Activated CD4-positive, alpha-beta T cell treated with anti-CD3 and anti-CD28 coated beads, Interleukin-2, amount 10 ng/mL, durations not matched to agents 24 days and 14 days (primary cell): ENCODE measurements at regions of chr5 and their contacts with region 1.

Region 1: DNA sequence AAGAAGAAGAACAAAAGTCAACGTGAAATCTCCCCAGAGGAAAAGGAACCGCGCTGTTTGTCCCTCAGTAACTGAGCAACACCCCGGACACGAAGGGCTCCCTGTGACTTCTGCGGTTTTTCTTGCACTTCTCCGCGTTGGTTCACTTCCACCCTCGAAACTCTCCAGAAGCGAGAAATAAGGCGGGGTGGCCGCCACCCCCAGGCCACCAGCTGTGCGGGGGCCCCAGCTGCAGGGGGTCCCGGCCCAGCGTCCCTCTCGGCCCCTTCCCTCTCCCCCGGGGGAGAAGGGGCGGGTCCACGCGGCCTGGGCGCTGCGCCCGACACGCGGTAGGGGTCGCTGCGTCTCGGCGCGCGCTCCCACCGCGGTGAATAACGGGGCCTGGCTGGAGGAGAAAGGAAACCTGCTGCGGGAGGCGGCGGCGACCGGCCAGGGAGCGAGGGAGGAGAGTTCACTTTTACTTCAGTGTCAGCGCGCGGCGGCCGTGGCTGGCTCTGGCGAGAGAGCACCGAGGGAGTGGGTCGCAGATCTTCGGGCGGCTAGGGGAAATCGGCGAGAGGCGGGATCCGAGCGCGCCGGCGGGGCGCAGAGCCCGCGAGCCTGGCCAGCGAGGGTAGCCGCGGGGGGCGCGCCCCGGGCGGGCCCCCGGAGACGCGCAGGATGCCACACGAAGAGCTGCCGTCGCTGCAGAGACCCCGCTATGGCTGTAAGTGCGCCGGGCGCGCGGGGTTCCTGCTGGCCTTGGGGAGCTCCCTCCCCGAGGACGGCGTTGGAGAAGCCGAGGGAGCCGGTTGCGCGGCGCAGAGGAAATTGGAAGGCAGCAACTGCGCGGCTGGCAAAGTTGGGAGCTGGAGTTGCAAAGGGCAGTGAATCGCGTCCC is at the start of gene IQGAP2:
- DNase-seq: peak; percentile 96
- H3K4me3 Mint-ChIP-seq: peak within 1 kb of the TSS; percentile 95
- H3K27ac Mint-ChIP-seq: peak within 1 kb of the TSS; percentile 99
- H3K4me1 Mint-ChIP-seq: peaks cover 57% of the 10 kb centered on the region
- H3K27me3 Mint-ChIP-seq: peaks cover 7% of the 10 kb centered on the region
- total RNA-seq, gene IQGAP2: 37.3 and 39.3 TPM in 2 replicates

Region 2: DNA sequence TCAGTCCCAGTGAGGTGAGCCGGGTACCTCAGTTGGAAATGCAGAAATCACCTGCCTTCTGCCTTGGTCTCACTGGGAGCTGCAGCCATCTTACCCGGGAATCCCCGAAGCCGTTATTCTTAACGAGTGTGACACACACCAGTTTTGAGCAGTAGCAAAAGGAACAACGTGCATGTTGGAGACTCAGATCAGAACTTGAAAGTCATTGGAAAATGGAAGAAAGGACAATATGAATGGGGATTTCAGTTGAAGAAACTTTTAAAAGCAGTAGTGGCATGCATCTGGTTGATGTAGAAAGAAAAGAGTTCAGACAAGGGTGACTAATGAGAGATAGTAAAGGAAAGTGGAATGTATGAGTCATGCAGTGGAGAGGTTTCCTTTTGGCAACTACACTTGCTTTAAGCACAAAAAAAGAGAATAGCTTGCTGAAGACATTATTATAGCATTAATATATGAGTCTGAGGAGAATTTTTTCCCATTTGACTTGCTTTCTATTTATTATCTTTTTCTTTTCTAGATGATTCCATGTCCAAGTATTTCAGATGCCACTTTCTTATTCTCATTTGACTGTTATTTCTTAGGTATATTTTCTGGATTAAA is 836.3 kb before region 1 on chr5:
- intact Hi-C with region 1: loop called (anchors 1 kb)
- DNase-seq: peak; percentile 83
- H3K4me3 Mint-ChIP-seq: peak overlapping the region; percentile 84
- H3K27ac Mint-ChIP-seq: peak overlapping the region; percentile 98
- H3K4me1 Mint-ChIP-seq: peaks cover 39% of the 10 kb centered on the region
- H3K27me3 Mint-ChIP-seq: peaks cover 2% of the 10 kb centered on the region

Region 3: DNA sequence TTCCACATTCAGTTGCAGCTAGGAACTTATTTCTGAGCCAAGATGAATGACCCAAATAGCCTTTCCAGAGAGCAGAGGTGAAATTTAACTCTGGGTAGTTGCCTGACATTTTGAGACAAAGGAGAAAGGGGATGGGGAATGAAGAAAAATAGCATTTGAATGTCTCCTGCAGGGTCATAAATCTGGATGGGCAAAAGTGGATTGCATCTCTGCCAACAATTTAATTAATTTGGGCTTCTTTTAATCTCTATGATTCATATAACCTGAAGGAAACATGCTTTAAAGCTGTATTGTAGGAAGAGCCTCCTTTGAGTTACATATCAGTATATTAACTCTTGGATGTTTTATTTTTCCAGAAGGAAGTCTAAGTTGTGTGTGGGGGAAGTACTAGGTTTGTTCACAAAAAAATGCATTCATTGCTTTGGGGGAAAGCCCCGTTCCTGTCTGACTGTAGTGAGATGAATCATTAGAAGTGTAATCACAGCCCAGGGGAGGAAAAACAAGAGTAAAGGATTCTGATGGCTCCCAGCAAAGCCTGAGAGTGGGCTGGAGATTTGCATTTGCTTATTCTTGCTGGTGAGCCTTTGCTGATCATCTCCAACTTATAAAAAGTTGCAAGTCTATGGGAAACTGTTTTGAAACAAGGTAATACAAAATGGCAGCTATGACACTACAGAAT is 133.1 kb before region 1 on chr5:
- intact Hi-C with region 1: loop called (anchors 1 kb)
- DNase-seq: peak; percentile 77
- H3K4me3 Mint-ChIP-seq: peak overlapping the region; percentile 83
- H3K27ac Mint-ChIP-seq: peak overlapping the region; percentile 95
- H3K4me1 Mint-ChIP-seq: peaks cover 41% of the 10 kb centered on the region
- H3K27me3 Mint-ChIP-seq: no peaks in the 10 kb centered on the region

Region 4: GRCh38 chr5:76473661-76474060 is 70.5 kb after region 1 on chr5:
- intact Hi-C with region 1: loop called (anchors 2 kb)
- DNase-seq: peak; percentile 88
- H3K4me3 Mint-ChIP-seq: peak overlapping the region; percentile 51
- H3K27ac Mint-ChIP-seq: peak overlapping the region; percentile 86
- H3K4me1 Mint-ChIP-seq: peaks cover 50% of the 10 kb centered on the region
- H3K27me3 Mint-ChIP-seq: no peaks in the 10 kb centered on the region

Region 5: DNA sequence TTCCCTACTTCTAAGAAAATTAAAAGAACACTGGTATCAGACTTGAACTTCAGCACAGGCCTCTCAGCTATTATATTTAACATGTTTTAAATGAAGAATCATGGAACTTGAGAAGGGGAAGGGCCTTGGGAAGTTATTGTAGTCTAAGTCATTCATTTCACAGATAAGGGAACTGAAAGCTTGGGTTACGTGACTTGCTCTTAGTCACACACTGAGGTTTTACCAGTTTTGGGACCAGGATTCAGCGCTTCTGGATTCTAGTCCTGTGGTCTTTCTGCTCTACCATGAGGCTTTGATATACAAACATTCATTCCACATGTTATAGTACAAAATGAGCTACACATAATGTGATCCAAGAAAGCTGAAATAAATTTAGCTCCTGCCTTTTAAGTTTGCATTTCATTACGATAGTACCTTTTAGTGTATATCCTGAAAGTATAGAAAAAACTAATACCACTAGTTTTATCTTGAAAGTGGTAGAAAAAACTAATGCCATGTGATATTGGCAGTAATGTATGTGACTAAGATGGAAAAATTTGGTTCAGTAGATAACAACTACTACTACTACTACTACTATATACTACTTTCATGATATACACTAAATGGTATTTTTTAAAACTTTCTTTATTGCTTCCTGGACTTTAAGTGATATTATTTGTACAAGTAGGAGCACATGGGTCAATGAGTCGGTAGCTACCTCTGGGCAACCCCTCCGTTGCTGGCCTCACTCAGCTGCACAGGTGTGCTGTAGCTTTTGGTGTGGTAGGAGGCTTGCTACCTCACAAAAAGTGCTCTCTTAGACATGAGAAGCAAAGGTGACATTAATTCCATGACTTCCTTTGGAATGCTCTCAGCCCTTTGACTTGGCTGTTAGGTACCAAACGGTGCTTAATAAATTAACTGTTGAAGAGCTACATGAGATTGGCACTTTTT is 179.4 kb after region 1 on chr5:
- intact Hi-C with region 1: loop called (anchors 1 kb)
- DNase-seq: no peak
- H3K4me3 Mint-ChIP-seq: no peak overlapping the region
- H3K27ac Mint-ChIP-seq: peak overlapping the region; percentile 62
- H3K4me1 Mint-ChIP-seq: peaks cover 25% of the 10 kb centered on the region
- H3K27me3 Mint-ChIP-seq: no peaks in the 10 kb centered on the region

Region 6: DNA sequence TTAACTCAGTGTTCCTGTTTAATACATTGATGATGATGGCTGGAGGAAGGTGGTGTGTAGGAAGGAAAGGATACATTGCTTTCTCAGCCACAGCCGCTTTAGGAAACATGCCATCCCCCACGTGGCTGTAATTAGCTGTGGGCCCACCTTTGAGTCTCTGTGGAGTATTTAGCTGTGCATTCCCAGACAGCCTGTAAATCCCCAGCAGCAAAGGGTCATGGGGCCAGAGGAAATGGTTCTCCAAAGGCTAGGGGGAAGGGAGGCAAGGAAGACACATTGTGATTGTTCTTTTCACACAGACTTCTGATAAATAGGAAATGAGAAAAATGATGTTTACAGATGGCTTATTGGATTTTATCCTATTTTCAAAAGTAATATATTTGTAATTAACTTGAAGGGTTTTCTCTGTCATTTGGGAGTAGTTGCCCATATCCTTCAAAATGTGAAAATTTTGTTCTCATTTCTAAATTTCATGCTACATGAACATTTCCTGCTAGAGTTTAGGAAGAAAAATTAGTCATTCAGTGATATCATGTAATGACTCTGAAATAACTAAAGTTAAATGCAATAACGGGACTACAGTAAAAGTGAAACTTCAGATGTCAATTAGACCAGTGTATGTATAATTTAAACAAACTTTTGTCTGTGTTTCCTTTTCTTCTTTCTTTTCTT is 288.5 kb after region 1 on chr5:
- intact Hi-C with region 1: loop called (anchors 5 kb)
- DNase-seq: no peak
- H3K4me3 Mint-ChIP-seq: no peak overlapping the region
- H3K27ac Mint-ChIP-seq: peak overlapping the region; percentile 66
- H3K4me1 Mint-ChIP-seq: peaks cover 25% of the 10 kb centered on the region
- H3K27me3 Mint-ChIP-seq: no peaks in the 10 kb centered on the region